ENCODE measurements at regions of chr11 and their contacts with region 1.

Region 1: GRCh38 chr11:87213444-87213843 is 175.7 kb downstream of the TMEM135 start:
- DNase-seq: no peak
- H3K4me3 Mint-ChIP-seq: no peak overlapping the region
- H3K27ac Mint-ChIP-seq: no peak overlapping the region
- H3K4me1 Mint-ChIP-seq: peaks cover 10% of the 10 kb centered on the region
- H3K27me3 Mint-ChIP-seq: no peaks in the 10 kb centered on the region

Region 2: GRCh38 chr11:87252869-87253268 is 39.4 kb after region 1 on chr11:
- intact Hi-C with region 1: loop called (anchors 1 kb)
- DNase-seq: no peak
- H3K4me3 Mint-ChIP-seq: no peak overlapping the region
- H3K27ac Mint-ChIP-seq: peak overlapping the region; percentile 72
- H3K4me1 Mint-ChIP-seq: peaks cover 15% of the 10 kb centered on the region
- H3K27me3 Mint-ChIP-seq: no peaks in the 10 kb centered on the region

Region 3: GRCh38 chr11:87473174-87473573 is 259.7 kb after region 1 on chr11:
- intact Hi-C with region 1: no loop called
- DNase-seq: no peak
- H3K4me3 Mint-ChIP-seq: no peak overlapping the region
- H3K27ac Mint-ChIP-seq: no peak overlapping the region
- H3K4me1 Mint-ChIP-seq: no peaks in the 10 kb centered on the region
- H3K27me3 Mint-ChIP-seq: no peaks in the 10 kb centered on the region

Region 4: GRCh38 chr11:87560352-87560751 is 346.9 kb after region 1 on chr11:
- intact Hi-C with region 1: no loop called
- DNase-seq: no peak
- H3K4me3 Mint-ChIP-seq: no peak overlapping the region
- H3K27ac Mint-ChIP-seq: no peak overlapping the region
- H3K4me1 Mint-ChIP-seq: no peaks in the 10 kb centered on the region
- H3K27me3 Mint-ChIP-seq: no peaks in the 10 kb centered on the region